Posterior vena cava (tissue), 2 donors: ENCODE measurements at regions of chr5 and their contacts with region 1.

Region 1: DNA sequence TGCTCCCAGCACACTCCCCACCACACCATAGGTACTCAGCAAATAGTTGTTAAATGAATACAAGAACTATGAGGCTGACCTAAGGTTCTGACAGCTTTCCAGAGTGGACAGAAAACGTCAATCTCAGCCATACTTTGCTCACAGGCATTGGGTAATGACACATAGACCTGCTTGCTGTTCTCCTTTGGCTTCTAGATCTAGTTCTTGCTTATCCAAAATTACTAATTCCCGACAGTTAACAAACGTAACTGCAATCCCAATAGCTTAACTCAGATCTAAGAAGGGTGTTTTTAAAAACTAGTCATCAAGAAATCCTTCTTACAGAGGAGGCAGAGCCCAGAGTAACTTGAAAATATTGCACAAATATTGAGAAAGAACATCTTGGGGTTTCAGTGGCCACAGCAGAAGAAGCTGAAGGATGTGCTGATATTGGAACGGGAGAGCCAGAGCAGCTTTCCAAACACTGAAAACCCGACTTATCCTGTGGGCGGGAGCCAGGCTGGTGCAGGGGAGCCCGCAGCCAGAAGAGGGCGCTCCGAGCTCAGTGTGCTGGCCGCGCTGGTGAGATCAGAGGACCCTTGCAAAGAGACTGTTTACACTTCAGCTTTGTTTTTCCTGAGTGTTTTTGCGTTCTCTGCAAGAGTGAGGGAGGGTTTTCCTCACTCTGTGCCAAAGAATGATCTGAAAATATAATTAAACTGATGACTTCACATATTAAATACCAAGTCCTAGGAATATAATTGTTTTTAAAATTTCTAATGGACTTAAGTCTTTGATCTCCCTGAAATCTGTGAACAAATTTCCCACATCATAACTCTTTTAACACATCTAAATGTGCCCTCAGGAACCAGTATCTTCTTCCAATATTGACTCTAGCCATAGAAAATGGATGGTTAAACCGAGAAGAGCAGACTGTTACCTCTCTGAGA is 30.3 kb downstream of the FGF1 start:
- DNase-seq: peak; percentile 95

Region 2: DNA sequence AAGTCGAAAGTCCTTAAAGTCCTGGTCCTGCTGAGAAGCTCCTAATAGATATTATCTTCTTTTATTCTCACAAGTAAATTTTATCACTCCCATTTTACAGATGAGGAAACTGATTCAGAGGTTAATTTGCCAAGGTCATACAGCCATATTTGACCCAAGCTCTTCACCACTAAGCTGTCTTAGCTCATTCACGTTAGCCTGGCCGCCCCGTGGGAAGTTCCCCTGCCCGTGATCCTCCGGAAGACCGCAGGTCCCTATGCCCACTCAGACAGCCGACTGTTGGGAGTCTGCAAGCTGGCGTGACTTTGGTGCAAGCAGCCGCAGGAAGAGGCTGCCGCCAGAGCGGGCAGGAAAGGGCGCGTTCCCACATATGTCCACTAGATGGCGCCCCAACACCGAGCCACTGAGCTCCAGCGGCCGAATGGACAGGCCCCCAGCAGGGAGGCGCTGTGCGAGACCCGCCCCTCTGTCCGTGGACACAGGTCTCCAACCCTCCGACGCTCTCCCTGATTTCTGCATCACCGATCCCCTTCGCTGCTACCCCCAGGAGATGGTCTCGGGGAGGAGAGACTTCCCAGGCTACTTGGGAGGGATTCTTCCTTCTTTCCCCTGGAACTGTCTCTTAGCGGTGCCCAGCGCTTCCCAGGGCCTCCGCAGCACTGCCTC is 963.6 kb before region 1 on chr5:
- intact Hi-C with region 1: no loop called
- DNase-seq: peak; percentile 96

Region 3: DNA sequence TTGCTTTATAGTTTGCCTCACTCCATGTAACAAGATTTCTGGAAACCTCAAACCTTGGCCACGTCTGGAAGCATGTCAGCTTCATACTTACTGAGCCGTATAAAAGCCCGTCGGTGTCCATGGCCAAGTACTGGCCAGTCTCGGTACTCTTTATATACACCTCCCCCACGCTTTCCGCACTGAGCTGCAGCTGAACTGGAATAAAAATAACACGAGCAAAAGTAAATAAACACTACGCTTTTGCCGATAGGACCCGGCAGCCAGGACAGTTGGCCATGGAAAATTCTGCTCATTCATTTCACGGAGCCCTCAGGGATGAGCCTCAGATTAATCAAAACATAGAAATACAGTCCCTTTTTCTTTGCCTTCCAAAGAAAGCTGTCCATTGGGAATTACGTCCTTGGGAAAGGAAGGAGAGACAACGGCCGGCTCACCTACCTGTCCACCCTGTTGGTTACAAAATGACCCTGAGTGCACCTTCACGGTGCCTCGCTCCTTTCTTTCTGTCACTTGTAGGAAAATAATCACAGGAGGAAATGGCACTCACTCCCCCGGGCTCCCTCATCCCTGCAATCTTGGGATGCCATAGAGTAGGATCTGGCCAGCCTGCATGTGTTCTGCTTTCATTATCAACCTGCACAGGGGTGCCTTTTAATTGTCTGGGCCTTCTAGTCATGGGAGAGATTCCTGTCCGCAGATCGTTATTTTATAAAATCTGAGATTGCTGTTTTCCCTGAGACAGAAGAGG is 54.8 kb before region 1 on chr5:
- intact Hi-C with region 1: loop called in 1 of 2 experiments (anchors 10 kb)
- DNase-seq: no peak

Region 4: DNA sequence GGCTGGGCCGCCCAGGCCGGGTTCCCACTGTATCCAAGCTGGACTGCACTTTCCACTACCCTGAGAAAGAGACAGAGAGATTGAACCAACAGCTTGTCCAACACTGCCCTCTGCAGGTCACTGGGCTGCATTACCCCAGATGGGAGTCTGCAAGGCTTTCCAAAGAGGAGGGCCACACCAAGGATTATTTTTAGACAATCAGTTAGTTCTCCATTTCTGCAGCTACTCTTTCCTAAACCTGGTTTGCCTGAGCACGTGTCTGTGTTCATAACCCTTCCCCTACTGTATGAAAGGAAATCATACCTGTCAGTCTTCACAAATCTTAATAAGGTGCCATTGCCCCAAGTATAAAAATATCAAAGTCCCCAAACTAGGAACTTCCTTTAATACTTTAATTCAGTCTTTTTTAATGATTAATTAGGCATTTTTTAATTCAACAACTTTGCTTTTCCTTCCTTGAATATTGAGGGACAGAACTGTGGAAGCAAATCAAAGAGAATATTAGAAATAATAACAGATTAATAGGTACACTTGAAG is 43.6 kb after region 1 on chr5:
- intact Hi-C with region 1: loop called (anchors 2 to 5 kb)
- DNase-seq: peak; percentile 95